OCI-LY7 (cell line): ENCODE measurements at regions of chr11 and their contacts with region 1.

Region 1: GRCh38 chr11:48109046-48109666 is 107.5 kb upstream of the OR4B1 start:
- DNase-seq: peak; percentile 82
- H3K4me3 ChIP-seq: peak overlapping the region; percentile 61
- H3K27ac ChIP-seq: peak overlapping the region; percentile 76
- H3K4me1 ChIP-seq: peaks cover 70% of the 10 kb centered on the region
- CTCF ChIP-seq: no peak; the same call in none of the 2 replicates

Region 2: GRCh38 chr11:47667135-47667534 is 442.0 kb before region 1 on chr11:
- CTCF ChIA-PET with region 1: no interaction called
- POLR2A ChIA-PET with region 1: no interaction called
- intact Hi-C with region 1: no loop called
- DNase-seq: no peak
- H3K4me3 ChIP-seq: no peak overlapping the region
- H3K27ac ChIP-seq: no peak overlapping the region
- H3K4me1 ChIP-seq: no peaks in the 10 kb centered on the region
- CTCF ChIP-seq: no peak

Region 3: GRCh38 chr11:47766305-47767227 is 342.6 kb before region 1 on chr11:
- CTCF ChIA-PET with region 1: interaction called, 4 read pairs
- POLR2A ChIA-PET with region 1: no interaction called
- intact Hi-C with region 1: loop called (anchors 2 kb)
- DNase-seq: peak; percentile 76
- H3K4me3 ChIP-seq: peak overlapping the region; percentile 86
- H3K27ac ChIP-seq: peak overlapping the region; percentile 81
- H3K4me1 ChIP-seq: peaks cover 18% of the 10 kb centered on the region
- CTCF ChIP-seq: no peak

Region 4: DNA sequence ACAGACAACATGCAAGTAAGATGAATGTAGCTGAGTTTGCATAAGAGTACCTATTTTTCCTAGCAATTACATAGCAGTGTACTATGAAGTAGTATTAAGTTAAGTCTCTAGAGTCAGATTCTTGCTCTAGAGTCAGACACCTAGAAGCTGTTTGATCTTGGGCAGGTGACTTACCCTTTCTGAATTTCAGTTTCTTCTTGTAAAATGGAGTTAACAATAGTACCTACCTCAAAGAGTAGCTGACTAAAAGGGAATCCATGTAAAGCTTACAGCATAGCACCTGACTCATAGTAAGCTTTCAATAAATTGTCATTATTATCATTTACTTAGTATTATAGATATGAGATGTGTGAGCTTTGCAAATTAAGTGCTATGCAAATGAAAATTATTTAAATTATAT is 176.6 kb before region 1 on chr11:
- CTCF ChIA-PET with region 1: interaction called, 35 read pairs
- POLR2A ChIA-PET with region 1: interaction called, 24 read pairs
- intact Hi-C with region 1: loop called (anchors 1 kb)
- DNase-seq: no peak
- H3K4me3 ChIP-seq: no peak overlapping the region
- H3K27ac ChIP-seq: no peak overlapping the region
- H3K4me1 ChIP-seq: peaks cover 47% of the 10 kb centered on the region
- CTCF ChIP-seq: no peak

Region 5: DNA sequence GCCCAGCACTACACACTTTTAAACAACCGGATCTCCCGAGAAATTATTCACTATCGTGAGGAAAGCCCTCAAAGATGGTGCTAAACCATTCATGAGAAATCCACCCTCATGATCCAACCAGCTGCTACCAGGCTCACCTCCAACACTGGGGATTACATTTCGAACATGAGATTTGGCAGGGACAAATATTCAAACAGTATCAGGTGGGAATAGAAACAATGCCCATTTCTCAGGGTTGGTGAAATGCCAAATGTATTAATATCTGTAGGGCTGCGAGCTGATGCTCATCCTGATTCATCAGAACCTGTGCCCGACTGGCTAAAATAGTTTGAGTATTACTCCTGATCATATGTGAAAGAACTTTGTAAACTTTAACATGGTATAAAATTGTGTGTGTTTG is 144.6 kb before region 1 on chr11:
- CTCF ChIA-PET with region 1: interaction called, 3 read pairs
- POLR2A ChIA-PET with region 1: interaction called, 7 read pairs
- intact Hi-C with region 1: loop called (anchors 1 kb)
- DNase-seq: no peak
- H3K4me3 ChIP-seq: no peak overlapping the region
- H3K27ac ChIP-seq: no peak overlapping the region
- H3K4me1 ChIP-seq: no peaks in the 10 kb centered on the region
- CTCF ChIP-seq: no peak

Region 6: GRCh38 chr11:48001438-48002021 is 107.6 kb before region 1 on chr11:
- CTCF ChIA-PET with region 1: interaction called, 3 read pairs
- POLR2A ChIA-PET with region 1: interaction called, 12 read pairs
- intact Hi-C with region 1: no loop called
- DNase-seq: peak; percentile 75
- H3K4me3 ChIP-seq: peak overlapping the region; percentile 45
- H3K27ac ChIP-seq: peak overlapping the region; percentile 85
- H3K4me1 ChIP-seq: peaks cover 91% of the 10 kb centered on the region
- CTCF ChIP-seq: no peak

Region 7: DNA sequence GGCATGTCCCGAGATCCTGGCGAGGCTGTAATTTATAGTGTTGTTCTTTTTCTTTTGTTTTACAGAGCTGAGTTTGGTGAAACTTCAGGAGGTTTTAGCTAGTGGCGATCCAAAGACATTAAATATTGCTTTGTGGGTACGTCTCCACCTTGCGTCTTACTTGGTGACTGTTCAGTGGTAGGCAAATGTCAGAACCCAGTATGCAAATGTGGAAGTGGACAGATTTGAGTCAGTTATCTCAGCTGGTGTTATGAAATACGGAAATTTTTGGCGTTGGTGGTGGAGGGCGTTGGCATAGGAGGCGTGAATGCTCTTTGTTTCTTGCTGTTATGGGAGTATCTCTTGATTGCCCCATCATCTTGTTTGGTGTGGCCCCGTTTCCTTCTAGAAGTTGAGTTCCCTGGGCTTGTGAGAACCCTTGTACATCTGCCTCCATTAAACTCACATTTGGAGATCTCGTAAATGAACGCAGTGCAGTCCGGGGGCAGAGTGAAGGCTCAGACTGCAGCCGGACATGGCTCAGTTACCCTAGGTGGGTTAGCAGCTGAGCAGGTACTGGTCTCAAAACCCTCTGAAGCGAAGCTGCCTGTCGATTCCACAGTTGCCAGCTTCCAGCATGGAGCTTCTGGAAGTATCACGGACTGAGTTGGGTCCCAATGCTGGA is 88.9 kb before region 1 on chr11:
- CTCF ChIA-PET with region 1: interaction called, 4 read pairs
- POLR2A ChIA-PET with region 1: interaction called, 14 read pairs
- intact Hi-C with region 1: loop called (anchors 1 kb)
- DNase-seq: peak; percentile 92
- H3K4me3 ChIP-seq: peak overlapping the region; percentile 66
- H3K27ac ChIP-seq: peak overlapping the region; percentile 92
- H3K4me1 ChIP-seq: peaks cover 99% of the 10 kb centered on the region
- CTCF ChIP-seq: peak; percentile 69

Region 8: DNA sequence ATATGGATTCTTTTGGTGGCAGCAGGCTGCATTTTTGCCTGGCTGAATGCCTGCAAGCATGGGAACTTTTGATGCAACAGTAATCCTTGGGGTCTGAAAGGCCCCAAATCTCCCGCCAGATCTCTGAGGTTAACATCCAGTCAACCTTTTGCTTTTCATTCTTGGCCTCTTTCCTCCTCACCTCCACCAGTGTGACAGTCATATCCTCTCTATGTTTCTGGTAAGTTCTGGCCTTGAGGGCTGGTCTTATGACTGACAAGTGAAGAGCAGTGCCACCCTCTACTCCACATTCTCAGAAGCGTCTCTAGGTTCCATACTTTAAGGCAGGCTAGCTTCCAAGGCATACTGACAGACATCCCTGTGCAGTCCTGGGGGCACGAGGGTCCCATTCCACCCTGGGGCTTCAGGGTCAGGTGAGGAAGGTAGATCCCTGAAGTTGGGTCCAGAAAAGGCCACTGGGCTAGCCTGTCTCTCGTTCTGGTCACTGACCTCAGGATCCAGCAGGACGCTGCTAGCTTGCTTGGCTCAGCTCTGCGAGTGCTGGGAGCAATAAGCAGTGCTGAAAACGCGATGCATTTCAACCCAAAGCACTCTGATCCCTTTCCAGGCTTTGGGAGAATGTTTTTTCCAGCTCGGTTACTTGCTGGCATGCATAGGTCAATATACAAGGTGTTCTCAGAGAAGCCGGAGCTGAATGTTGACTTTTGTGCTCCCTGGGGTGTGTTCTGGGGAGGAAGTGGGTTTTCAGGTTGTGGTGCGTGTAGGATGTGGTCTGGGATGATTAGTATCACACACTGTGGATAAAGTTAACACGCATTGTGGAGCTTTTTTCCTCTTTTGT is 53.6 kb before region 1 on chr11:
- CTCF ChIA-PET with region 1: interaction called, 5 read pairs
- POLR2A ChIA-PET with region 1: interaction called, 20 read pairs
- intact Hi-C with region 1: no loop called
- DNase-seq: peak; percentile 71
- H3K4me3 ChIP-seq: peak overlapping the region; percentile 7
- H3K27ac ChIP-seq: no peak overlapping the region
- H3K4me1 ChIP-seq: peaks cover 63% of the 10 kb centered on the region
- CTCF ChIP-seq: no peak

Region 9: DNA sequence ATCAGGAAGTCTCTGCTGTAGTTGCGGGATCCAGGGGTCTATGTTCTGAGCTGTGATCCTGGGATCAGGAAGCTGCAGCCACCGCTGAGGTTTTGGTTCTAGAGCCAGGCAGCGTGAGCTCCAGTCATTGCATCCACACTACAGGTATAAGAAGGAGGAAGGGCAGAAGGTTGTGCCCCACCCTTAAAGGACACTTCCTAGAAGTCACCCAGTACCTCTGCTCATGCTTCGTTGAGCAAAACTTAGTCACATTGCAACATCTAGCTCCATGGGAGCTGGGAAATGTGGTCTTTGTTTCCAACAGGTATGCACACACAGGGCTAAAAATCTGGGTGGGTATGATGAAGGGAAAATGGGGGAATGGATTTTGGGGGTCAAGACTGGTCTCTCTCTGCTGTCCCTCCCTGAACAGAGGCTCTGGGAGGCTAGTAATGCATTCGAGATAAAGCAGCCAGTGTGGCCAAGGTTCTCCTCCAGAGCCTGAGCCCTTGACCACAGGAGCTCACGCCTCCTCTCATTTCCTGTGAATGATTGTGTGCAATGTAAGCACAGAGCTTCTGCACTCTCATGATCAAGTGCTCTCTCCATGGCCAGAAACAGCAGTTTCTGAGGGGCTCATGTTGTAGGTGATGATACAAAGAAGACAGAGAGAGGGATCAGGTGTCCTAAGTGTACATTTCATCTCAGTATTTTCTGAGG is 20.7 kb after region 1 on chr11:
- CTCF ChIA-PET with region 1: no interaction called
- POLR2A ChIA-PET with region 1: no interaction called
- intact Hi-C with region 1: no loop called
- DNase-seq: no peak
- H3K4me3 ChIP-seq: no peak overlapping the region
- H3K27ac ChIP-seq: no peak overlapping the region
- H3K4me1 ChIP-seq: no peaks in the 10 kb centered on the region
- CTCF ChIP-seq: no peak

Region 10: GRCh38 chr11:48161951-48162884 is 53.1 kb after region 1 on chr11:
- CTCF ChIA-PET with region 1: no interaction called
- POLR2A ChIA-PET with region 1: no interaction called
- intact Hi-C with region 1: no loop called
- DNase-seq: no peak
- H3K4me3 ChIP-seq: no peak overlapping the region
- H3K27ac ChIP-seq: no peak overlapping the region
- H3K4me1 ChIP-seq: no peaks in the 10 kb centered on the region
- CTCF ChIP-seq: no peak

Region 11: DNA sequence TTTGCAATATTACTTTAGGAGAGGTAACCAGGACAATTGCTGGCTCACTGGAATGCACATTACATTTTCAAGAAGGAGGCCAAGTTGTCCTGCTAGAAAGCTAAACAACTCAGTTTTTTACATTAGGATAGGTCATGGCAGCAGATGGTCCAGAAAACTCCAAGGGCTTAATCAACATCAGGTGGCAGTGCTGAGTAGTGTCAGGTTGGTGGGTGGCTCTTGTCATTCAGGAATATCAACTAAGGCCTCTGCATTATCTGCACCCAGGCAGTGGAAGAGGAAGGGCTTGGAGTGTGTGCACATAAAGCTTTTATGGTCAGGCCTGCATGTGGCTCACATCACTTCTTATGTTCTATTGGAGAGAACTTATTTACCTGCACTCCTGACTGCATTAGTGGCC is 75.3 kb after region 1 on chr11:
- CTCF ChIA-PET with region 1: no interaction called
- POLR2A ChIA-PET with region 1: no interaction called
- intact Hi-C with region 1: no loop called
- DNase-seq: no peak
- H3K4me3 ChIP-seq: no peak overlapping the region
- H3K27ac ChIP-seq: no peak overlapping the region
- H3K4me1 ChIP-seq: no peaks in the 10 kb centered on the region
- CTCF ChIP-seq: peak; percentile 26; the same call in 1 of the 2 replicates